ENCODE measurements at regions of chr19 and their contacts with region 1.

Region 1: GRCh38 chr19:54168174-54168917 is 4.6 kb downstream of the TMC4 start:
- DNase-seq: no peak
- H3K4me3 ChIP-seq: no peak overlapping the region
- CTCF ChIP-seq: peak; percentile 96

Region 2: GRCh38 chr19:54017261-54017660 is 151.1 kb before region 1 on chr19:
- CTCF ChIA-PET with region 1: no interaction called
- POLR2A ChIA-PET with region 1: no interaction called
- DNase-seq: no peak
- H3K4me3 ChIP-seq: no peak overlapping the region
- CTCF ChIP-seq: no peak

Region 3: GRCh38 chr19:54178581-54179243 is 10.4 kb after region 1 on chr19:
- CTCF ChIA-PET with region 1: interaction called, 14 read pairs
- POLR2A ChIA-PET with region 1: no interaction called
- DNase-seq: no peak
- H3K4me3 ChIP-seq: no peak overlapping the region
- CTCF ChIP-seq: no peak

Region 4: DNA sequence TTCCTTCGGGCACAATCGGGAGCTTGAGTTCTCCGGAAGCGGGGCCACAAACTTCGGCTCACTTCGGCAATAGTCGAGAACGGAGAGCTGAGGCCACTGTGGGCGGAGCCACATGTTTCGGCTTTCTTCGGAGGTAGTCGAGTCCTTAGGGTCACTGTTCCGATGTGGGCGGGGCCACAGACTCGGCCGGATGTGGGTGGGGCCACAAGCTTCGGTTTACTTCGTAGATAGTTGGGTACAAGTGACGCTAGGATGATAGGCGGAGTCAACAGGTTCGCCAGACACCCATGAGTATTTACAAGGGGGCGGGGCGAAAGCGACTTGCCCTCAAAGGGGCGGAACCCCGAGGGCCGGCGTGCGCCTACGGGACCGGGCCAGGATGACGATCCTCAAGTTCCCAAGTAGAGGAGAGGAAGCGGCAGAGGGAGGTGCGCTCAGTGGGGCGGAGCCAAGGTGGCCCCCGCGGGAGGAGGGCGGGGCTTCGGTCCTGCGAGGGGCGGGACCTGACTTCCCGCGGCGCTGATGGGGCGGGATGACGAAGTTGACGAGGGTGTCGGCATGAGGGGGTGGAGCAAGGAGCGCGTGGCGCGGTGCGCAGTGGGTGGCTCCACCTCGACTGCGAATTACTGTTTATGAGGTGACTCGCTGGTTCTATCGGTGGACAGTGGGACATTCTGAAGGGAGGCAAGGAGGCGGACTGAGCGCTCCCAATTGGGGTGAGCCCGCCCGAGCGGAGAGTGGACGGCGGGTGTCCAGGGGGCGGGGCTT is 21.6 kb after region 1 on chr19:
- CTCF ChIA-PET with region 1: interaction called, 44 read pairs
- POLR2A ChIA-PET with region 1: interaction called, 10 read pairs
- DNase-seq: peak; percentile 100
- H3K4me3 ChIP-seq: peak overlapping the region; percentile 89
- CTCF ChIP-seq: no peak

Region 5: DNA sequence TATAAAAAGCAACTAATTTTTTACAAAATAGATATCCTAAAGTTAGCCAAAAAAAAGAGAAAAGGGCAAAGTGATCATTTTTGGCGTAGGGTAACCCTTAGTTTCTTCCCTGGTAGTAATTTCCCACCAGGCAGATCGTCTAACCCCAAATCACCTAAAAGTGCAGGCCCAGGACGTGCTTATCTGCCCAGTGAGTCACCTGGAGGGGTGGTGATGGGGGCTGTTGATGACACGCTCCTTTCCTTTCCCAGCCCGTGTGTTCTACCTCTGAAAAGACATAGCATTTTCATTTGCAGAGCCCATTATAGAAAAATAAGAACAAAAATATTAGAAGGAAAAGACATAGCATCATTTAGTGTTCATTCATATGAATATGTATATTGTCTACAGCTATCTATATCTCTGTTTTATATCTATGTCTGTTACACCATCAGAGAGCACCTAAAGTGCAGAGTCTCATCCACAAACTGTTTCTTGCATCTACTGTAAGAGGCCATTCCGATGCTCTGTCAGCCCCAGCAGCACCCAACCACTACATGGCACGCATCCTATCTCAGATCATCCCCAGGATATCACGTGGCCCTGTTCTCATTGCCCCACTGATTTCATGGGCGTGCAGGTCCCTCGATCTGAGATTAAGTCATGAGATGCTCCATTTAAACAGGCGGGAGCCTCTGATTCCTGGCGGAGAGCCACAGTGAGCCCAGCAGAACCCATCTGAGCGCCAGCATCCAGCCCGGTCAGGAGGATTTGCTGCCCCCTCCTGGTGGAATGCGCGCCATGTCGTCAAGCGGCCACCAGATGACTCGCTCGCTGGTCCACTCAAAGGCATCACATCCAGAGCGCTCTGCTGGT is 63.0 kb after region 1 on chr19:
- CTCF ChIA-PET with region 1: interaction called, 22 read pairs
- POLR2A ChIA-PET with region 1: no interaction called
- DNase-seq: no peak
- H3K4me3 ChIP-seq: no peak overlapping the region
- CTCF ChIP-seq: peak; percentile 93

Region 6: GRCh38 chr19:54266133-54266532 is 97.8 kb after region 1 on chr19:
- CTCF ChIA-PET with region 1: interaction called, 10 read pairs
- POLR2A ChIA-PET with region 1: no interaction called
- DNase-seq: no peak
- H3K4me3 ChIP-seq: no peak overlapping the region
- CTCF ChIP-seq: peak; percentile 69

Region 7: GRCh38 chr19:54390942-54391577 is 222.7 kb after region 1 on chr19:
- CTCF ChIA-PET with region 1: interaction called, 25 read pairs
- POLR2A ChIA-PET with region 1: no interaction called
- DNase-seq: peak; percentile 4
- H3K4me3 ChIP-seq: no peak overlapping the region
- CTCF ChIP-seq: peak; percentile 69

Region 8: GRCh38 chr19:54502518-54503048 is 334.2 kb after region 1 on chr19 and contains the start of gene LAIR2:
- CTCF ChIA-PET with region 1: no interaction called
- POLR2A ChIA-PET with region 1: no interaction called
- DNase-seq: no peak
- H3K4me3 ChIP-seq: no peak within 1 kb of the TSS
- CTCF ChIP-seq: no peak